Calu3 (cell line): ENCODE measurements at regions of chr17 and their contacts with region 1.

Region 1: GRCh38 chr17:37506678-37507077 is 17.0 kb downstream of the DUSP14 start:
- DNase-seq: peak; percentile 77
- H3K4me3 Mint-ChIP-seq: no peak overlapping the region
- H3K27ac Mint-ChIP-seq: no peak overlapping the region
- H3K4me1 Mint-ChIP-seq: no peaks in the 10 kb centered on the region
- H3K27me3 Mint-ChIP-seq: no peaks in the 10 kb centered on the region
- CTCF ChIP-seq: peak; percentile 98

Region 2: DNA sequence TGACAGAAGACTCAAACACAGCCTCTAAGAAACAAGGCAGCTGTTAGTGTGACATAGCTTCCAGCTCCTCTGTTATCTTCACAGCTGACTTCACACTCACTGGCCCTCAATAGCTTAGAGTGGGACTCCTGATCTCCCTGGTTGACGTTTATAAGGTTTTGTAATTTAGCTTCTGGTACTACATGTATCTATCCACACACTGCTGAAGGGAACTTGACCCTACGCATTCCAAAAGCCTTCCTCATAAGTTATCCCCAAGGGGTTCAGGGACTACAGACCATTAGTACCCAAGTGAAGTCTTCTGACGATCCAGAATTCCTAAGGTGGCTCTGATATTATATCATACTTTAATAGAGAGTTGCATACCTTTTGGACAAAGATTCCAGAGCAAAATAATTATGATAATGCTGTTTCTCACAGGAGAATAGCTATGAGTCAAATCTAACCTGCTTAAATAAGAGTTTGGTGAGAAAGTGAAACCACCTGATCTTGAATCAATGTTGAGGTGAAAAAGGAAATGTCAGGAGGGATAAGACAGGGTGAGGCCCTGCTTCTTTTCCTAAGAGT is 114.6 kb before region 1 on chr17:
- CTCF ChIA-PET with region 1: no interaction called
- intact Hi-C with region 1: no loop called
- DNase-seq: no peak
- H3K4me3 Mint-ChIP-seq: peak overlapping the region; percentile 38
- H3K27ac Mint-ChIP-seq: peak overlapping the region; percentile 9
- H3K4me1 Mint-ChIP-seq: peaks cover 20% of the 10 kb centered on the region
- H3K27me3 Mint-ChIP-seq: no peaks in the 10 kb centered on the region
- CTCF ChIP-seq: no peak

Region 3: GRCh38 chr17:37494971-37495370 is 11.7 kb before region 1 on chr17:
- CTCF ChIA-PET with region 1: interaction called, 3 read pairs
- intact Hi-C with region 1: loop called (anchors 1 kb)
- DNase-seq: no peak
- H3K4me3 Mint-ChIP-seq: no peak overlapping the region
- H3K27ac Mint-ChIP-seq: no peak overlapping the region
- H3K4me1 Mint-ChIP-seq: peaks cover 46% of the 10 kb centered on the region
- H3K27me3 Mint-ChIP-seq: no peaks in the 10 kb centered on the region
- CTCF ChIP-seq: no peak

Region 4: GRCh38 chr17:37567137-37567536 is 60.5 kb after region 1 on chr17:
- CTCF ChIA-PET with region 1: no interaction called
- intact Hi-C with region 1: no loop called
- DNase-seq: no peak
- H3K4me3 Mint-ChIP-seq: no peak overlapping the region
- H3K27ac Mint-ChIP-seq: no peak overlapping the region
- H3K4me1 Mint-ChIP-seq: no peaks in the 10 kb centered on the region
- H3K27me3 Mint-ChIP-seq: no peaks in the 10 kb centered on the region
- CTCF ChIP-seq: no peak